Activated B cell treated with CpG ODN at 0.5 μM for 24 hours (primary cell): ENCODE measurements at regions of chr9 and their contacts with region 1.

Region 1: GRCh38 chr9:35116898-35117551 is 1.4 kb upstream of the ATOSB start:
- DNase-seq: peak; percentile 60
- ATAC-seq: peak; percentile 62
- H3K4me3 Mint-ChIP-seq: peak overlapping the region; percentile 96
- H3K27ac Mint-ChIP-seq: peak overlapping the region; percentile 94
- H3K4me1 Mint-ChIP-seq: peaks cover 43% of the 10 kb centered on the region
- H3K27me3 Mint-ChIP-seq: no peaks in the 10 kb centered on the region
- CTCF ChIP-seq: peak; percentile 71

Region 2: DNA sequence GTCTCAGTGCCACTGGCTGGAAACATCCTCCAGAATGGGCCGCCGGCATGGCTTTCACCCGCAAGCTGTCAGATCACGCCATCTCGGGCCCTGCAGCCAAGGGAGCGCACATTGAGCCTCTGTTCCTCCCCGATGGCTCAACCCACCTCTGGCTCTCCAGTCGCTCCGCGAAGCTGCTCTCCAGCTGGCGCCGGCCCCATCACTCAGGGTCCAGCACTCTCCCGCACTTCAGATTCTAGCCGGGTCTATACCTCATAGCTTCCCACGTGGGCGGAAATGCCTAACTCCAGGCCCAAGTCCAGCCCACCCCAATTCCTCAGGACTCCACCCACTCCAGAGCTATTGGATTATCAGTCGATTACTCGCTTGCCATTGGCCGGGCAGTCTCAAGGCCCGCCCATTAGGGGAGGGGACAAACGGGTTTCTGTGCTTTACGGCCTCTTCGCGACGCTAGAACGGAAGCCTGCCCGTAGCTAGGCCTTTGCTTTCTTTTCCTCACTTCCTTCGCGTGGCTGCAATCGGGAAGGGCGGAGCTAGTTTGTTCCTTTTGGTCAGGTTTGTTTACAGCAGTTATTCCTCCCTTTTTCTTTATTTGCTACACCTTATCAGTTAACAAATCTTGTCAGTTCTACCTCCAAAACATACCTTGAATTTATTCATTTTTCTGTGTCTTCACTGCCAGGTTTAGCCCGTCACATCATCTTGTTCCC is 1643.2 kb before region 1 on chr9 and contains the start of gene NOL6:
- CTCF ChIA-PET with region 1: no interaction called
- POLR2A ChIA-PET with region 1: no interaction called
- intact Hi-C with region 1: loop called (anchors 10 kb)
- DNase-seq: peak; percentile 93
- ATAC-seq: peak; percentile 99
- H3K4me3 Mint-ChIP-seq: peak within 1 kb of the TSS; percentile 99
- H3K27ac Mint-ChIP-seq: peak within 1 kb of the TSS; percentile 94
- H3K4me1 Mint-ChIP-seq: peaks cover 28% of the 10 kb centered on the region
- H3K27me3 Mint-ChIP-seq: no peaks in the 10 kb centered on the region
- CTCF ChIP-seq: no peak
- total RNA-seq, gene NOL6: 59.9 and 60.1 TPM in 2 replicates

Region 3: DNA sequence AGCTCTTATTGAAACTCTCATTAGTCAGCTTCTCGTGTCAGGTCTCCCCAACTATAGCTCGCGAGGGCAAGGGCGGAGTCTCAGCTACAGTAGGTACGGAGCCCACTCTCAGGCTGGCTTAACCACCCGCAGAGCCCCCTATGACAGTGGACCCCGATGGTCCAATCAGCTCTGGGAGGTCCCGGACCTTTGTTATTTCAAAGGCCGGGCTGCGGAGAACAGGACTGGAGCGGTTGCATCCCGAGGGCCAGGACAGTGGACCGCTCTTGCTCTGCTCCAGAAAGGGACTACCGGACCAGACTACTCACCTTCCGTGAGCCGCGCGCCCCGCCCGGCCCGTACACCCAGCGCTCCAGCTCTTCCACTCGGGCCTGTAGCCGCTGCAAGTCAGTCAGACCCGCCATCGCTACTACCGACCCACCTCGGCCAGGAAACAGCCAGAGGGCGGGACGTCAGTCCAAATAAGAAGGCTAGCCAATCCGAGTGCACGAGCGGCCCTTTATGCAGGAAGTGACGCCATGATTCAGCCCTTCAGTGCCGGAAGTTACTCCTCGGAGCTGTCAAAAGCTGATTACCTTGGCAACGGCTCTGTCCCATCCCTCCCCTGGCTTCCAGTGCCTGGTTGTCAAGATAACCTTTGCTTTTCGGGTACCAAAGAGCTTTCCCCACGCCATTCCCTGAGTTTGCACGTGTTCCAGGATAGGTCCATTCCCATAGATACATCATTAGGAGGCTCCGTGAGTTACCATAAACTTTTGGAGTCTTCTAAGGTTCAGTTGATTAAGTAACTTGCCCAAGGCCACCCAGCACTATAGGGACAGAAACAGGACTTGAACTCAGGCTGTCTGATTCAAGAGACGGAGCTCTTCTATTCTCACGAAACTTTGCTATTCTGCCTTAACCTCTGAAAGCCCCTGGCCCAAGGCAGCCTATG is 496.7 kb before region 1 on chr9 and contains the start of gene DCTN3:
- CTCF ChIA-PET with region 1: no interaction called
- POLR2A ChIA-PET with region 1: no interaction called
- intact Hi-C with region 1: no loop called
- DNase-seq: peak; percentile 69
- ATAC-seq: peak; percentile 98
- H3K4me3 Mint-ChIP-seq: peak within 1 kb of the TSS; percentile 95
- H3K27ac Mint-ChIP-seq: peak within 1 kb of the TSS; percentile 73
- H3K4me1 Mint-ChIP-seq: peaks cover 29% of the 10 kb centered on the region
- H3K27me3 Mint-ChIP-seq: peaks cover 30% of the 10 kb centered on the region
- CTCF ChIP-seq: no peak
- total RNA-seq, gene DCTN3: 63.9 and 64.3 TPM in 2 replicates

Region 4: DNA sequence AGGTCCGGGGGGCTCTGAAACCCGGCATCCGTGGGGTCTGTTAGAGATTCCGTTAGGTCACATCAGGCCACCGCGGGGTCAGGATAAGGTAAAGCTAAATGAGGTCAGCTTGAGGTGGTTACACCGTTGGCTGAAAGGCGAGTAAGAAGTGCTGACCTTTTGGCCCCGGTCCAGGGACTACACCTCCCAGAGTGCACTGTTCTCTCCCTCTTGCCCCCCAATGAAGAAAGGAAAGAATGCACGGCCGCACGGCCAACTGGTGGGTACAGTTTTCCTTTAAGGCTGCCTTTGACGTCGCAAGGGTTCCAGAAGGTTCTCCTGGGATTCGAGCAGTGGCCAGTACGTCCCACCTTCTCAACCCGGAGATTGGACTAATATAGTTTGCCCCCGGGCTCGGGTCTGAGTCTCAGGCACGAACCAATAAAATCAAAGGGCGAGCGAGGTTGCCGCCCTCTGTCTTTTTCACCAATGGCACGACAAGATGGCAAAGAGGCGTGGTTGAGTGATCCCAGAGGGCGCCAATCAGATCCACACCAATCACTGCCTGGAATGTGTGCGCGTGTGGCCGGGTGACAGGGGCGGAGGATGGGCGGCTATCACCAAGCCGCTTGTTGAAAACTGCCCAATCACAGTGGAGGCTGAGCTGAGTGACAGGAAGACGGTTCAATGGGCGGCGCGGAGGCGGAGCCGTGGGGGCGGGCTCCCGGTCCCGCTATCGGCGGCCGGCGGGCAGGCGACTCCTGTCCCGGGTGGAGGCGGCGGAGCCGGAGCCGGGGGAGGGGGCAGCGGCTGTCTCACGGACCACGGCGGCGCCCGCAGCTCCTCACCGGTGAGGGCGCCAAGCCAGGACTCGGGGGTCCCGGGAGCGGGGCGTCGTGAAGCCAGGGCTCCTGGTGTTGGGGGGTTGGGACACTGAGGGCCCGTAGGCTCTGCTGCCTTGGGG is 127.8 kb before region 1 on chr9 and contains the start of gene DNAJB5:
- CTCF ChIA-PET with region 1: no interaction called
- POLR2A ChIA-PET with region 1: no interaction called
- intact Hi-C with region 1: loop called (anchors 1 kb)
- DNase-seq: peak; percentile 96
- ATAC-seq: peak; percentile 91
- H3K4me3 Mint-ChIP-seq: peak within 1 kb of the TSS; percentile 97
- H3K27ac Mint-ChIP-seq: peak within 1 kb of the TSS; percentile 92
- H3K4me1 Mint-ChIP-seq: peaks cover 77% of the 10 kb centered on the region
- H3K27me3 Mint-ChIP-seq: peaks cover 2% of the 10 kb centered on the region
- CTCF ChIP-seq: no peak
- total RNA-seq, gene DNAJB5: 5.4 and 6.4 TPM in 2 replicates

Region 5: GRCh38 chr9:35096035-35096849 is 20.8 kb before region 1 on chr9 and contains the start of gene PIGO:
- CTCF ChIA-PET with region 1: interaction called, 3 read pairs
- POLR2A ChIA-PET with region 1: interaction called, 10 read pairs
- intact Hi-C with region 1: loop called (anchors 1 kb)
- DNase-seq: peak; percentile 81
- ATAC-seq: peak; percentile 92
- H3K4me3 Mint-ChIP-seq: peak within 1 kb of the TSS; percentile 87
- H3K27ac Mint-ChIP-seq: peak within 1 kb of the TSS; percentile 93
- H3K4me1 Mint-ChIP-seq: peaks cover 30% of the 10 kb centered on the region
- H3K27me3 Mint-ChIP-seq: no peaks in the 10 kb centered on the region
- CTCF ChIP-seq: peak; percentile 60
- total RNA-seq, gene PIGO: 30.4 and 34.1 TPM in 2 replicates

Region 6: GRCh38 chr9:35258676-35259474 is 141.8 kb after region 1 on chr9:
- CTCF ChIA-PET with region 1: interaction called, 30 read pairs
- POLR2A ChIA-PET with region 1: no interaction called
- intact Hi-C with region 1: loop called (anchors 1 kb)
- DNase-seq: no peak
- ATAC-seq: peak; percentile 34
- H3K4me3 Mint-ChIP-seq: no peak overlapping the region
- H3K27ac Mint-ChIP-seq: no peak overlapping the region
- H3K4me1 Mint-ChIP-seq: no peaks in the 10 kb centered on the region
- H3K27me3 Mint-ChIP-seq: peaks cover under 1% of the 10 kb centered on the region
- CTCF ChIP-seq: no peak

Region 7: GRCh38 chr9:35553670-35554543 is 436.9 kb after region 1 on chr9:
- CTCF ChIA-PET with region 1: interaction called, 3 read pairs
- POLR2A ChIA-PET with region 1: no interaction called
- intact Hi-C with region 1: loop called (anchors 1 kb)
- DNase-seq: no peak
- ATAC-seq: peak; percentile 40
- H3K4me3 Mint-ChIP-seq: no peak overlapping the region
- H3K27ac Mint-ChIP-seq: no peak overlapping the region
- H3K4me1 Mint-ChIP-seq: peaks cover 2% of the 10 kb centered on the region
- H3K27me3 Mint-ChIP-seq: no peaks in the 10 kb centered on the region
- CTCF ChIP-seq: no peak

Region 8: DNA sequence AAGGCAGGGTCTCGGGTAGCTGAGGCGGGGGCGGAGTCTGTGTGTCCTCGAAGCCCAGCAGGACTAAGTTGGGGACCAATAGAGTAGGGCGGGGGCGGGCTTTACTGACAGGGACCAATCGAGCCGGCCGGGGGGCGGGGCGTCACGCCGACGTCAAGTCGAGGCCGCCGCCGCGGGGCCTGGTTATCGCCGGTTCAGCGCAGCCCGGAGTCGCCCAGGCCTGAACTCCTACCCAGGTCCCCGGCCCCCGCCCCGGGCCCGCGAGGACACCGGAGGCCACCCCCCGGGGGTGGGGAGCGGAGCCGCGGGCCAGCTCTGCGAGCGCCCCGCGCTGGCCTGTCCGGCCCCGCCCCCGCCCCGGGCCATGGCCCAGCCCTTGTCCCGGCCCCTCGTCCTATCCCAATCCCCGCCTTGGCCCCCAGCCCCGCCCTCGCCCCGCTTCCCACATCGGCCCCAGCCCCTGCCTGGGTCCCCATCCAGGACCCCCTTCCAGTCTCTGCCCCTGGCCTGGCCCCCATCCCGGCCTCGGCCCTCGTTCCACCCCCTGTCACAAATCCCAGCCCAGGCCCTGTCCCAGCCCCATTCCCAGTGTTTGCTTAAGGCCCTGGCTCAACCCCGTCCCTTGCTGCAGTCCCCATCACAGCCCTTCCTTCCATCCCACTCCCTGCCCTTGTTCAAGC is 712.2 kb after region 1 on chr9 and contains the start of gene TMEM8B:
- CTCF ChIA-PET with region 1: no interaction called
- POLR2A ChIA-PET with region 1: no interaction called
- intact Hi-C with region 1: loop called (anchors 5 kb)
- DNase-seq: peak; percentile 89
- ATAC-seq: peak; percentile 92
- H3K4me3 Mint-ChIP-seq: peak within 1 kb of the TSS; percentile 95
- H3K27ac Mint-ChIP-seq: peak within 1 kb of the TSS; percentile 86
- H3K4me1 Mint-ChIP-seq: peaks cover 34% of the 10 kb centered on the region
- H3K27me3 Mint-ChIP-seq: no peaks in the 10 kb centered on the region
- CTCF ChIP-seq: no peak
- total RNA-seq, gene TMEM8B: 5.0 and 8.0 TPM in 2 replicates